Ovary (tissue), 10 donors: ENCODE measurements at regions of chr2 and their contacts with region 1.

Region 1: DNA sequence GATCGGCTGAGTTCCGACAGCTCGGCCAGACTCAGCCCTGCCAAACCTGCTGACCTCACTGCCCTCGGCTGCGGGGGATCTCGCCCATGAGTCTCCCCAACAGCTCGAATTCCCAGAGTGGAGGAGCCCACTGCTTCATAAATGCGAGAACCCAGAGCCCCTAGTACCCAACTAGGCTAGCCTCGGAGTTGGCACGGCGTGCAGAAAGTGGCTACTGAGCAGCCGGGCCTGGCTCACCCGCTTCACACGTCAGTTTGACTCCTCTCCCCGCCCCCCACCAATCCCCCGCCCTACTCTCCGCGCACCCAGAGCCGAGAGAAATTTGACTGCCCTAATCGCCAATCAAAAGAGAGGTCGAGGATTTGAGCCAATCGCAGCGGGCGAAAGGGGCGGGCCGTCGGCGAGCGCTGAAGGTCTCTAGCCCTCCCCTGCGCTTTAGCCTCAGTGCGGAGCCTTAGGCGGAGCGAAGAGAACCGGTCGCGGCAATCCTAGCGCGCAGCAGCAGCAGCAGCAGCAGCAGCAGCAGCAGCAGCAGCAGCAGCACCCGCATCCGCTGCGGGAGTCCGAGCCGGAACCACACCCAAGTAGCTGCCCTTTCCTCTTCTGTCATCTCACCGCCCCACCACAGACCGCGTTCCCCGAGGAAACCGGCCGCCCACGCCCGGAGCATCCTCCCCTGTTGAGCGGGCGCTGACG is at the start of gene GLS:
- DNase-seq: peak; percentile 96 to 98 (median 97)
- H3K4me3 ChIP-seq: peak within 1 kb of the TSS; percentile 96
- H3K27ac ChIP-seq: peak within 1 kb of the TSS; percentile 89 to 95
- H3K4me1 ChIP-seq: peaks cover 3% of the 10 kb centered on the region
- H3K27me3 ChIP-seq: no peaks in the 10 kb centered on the region
- CTCF ChIP-seq: no peak
- EP300 ChIP-seq: no peak
- POLR2A ChIP-seq: peak; percentile 99
- total RNA-seq, gene GLS: 71.2 to 141 (median 77.1) TPM

Region 2: DNA sequence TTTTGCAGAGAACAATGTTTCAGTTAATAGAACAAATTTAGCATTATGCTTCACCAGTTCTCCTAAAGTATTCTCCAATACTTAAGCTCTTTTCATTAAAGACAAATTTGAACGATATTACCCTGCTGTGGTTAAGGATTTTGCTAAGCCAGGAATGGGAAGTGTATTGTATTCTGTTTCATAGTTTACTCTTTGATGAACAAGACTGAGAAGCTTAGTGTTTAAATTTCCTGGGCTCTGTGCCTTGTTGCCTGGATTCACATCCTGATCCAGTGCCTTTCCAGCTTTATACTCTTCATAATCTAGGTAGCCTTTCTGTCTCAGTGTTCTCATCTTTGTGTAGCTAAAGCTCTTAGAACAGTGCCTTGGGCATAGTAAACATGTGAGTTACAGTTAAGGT is 58.5 kb before region 1 on chr2:
- intact Hi-C with region 1: no loop called
- DNase-seq: no peak
- H3K4me3 ChIP-seq: no peak overlapping the region
- H3K27ac ChIP-seq: no peak overlapping the region
- H3K4me1 ChIP-seq: no peaks in the 10 kb centered on the region
- H3K27me3 ChIP-seq: no peaks in the 10 kb centered on the region
- CTCF ChIP-seq: no peak
- EP300 ChIP-seq: no peak
- POLR2A ChIP-seq: no peak

Region 3: GRCh38 chr2:190947711-190948251 is 67.3 kb after region 1 on chr2:
- intact Hi-C with region 1: loop called in 1 of 4 experiments (anchors 10 kb)
- DNase-seq: no peak
- H3K4me3 ChIP-seq: no peak overlapping the region
- H3K27ac ChIP-seq: peak overlapping the region in 1 of 2 donors; percentile 15
- H3K4me1 ChIP-seq: peaks cover 6% of the 10 kb centered on the region
- H3K27me3 ChIP-seq: no peaks in the 10 kb centered on the region
- CTCF ChIP-seq: no peak
- EP300 ChIP-seq: no peak
- POLR2A ChIP-seq: no peak

Region 4: GRCh38 chr2:191013932-191014652 is 133.6 kb after region 1 on chr2 and contains the start of gene STAT1:
- intact Hi-C with region 1: loop called in 1 of 4 experiments (anchors 10 kb)
- DNase-seq: peak; percentile 91 to 97 (median 95)
- H3K4me3 ChIP-seq: peak within 1 kb of the TSS; percentile 100
- H3K27ac ChIP-seq: peak within 1 kb of the TSS; percentile 43 to 75
- H3K4me1 ChIP-seq: peaks cover 20% of the 10 kb centered on the region
- H3K27me3 ChIP-seq: no peaks in the 10 kb centered on the region
- CTCF ChIP-seq: peak in 1 of 3 donors; percentile 32
- EP300 ChIP-seq: no peak
- POLR2A ChIP-seq: peak; percentile 83
- total RNA-seq, gene STAT1: 27.3 to 57.6 (median 46.4) TPM